PC-3 (cell line): ENCODE measurements at regions of chr5 and their contacts with region 1.

Region 1: GRCh38 chr5:11801061-11801460 is 103.2 kb downstream of the CTNND2 start:
- DNase-seq: peak; percentile 95
- ATAC-seq: peak; percentile 95
- H3K4me3 ChIP-seq: no peak overlapping the region
- H3K27ac ChIP-seq: peak overlapping the region; percentile 11
- H3K4me1 ChIP-seq: peaks cover 32% of the 10 kb centered on the region
- H3K27me3 ChIP-seq: no peaks in the 10 kb centered on the region
- CTCF ChIP-seq: no peak

Region 2: GRCh38 chr5:11212706-11213105 is 588.4 kb before region 1 on chr5:
- CTCF ChIA-PET with region 1: no interaction called
- POLR2A ChIA-PET with region 1: no interaction called
- intact Hi-C with region 1: no loop called
- DNase-seq: no peak
- ATAC-seq: no peak
- H3K4me3 ChIP-seq: no peak overlapping the region
- H3K27ac ChIP-seq: no peak overlapping the region
- H3K4me1 ChIP-seq: no peaks in the 10 kb centered on the region
- H3K27me3 ChIP-seq: peaks cover 38% of the 10 kb centered on the region
- CTCF ChIP-seq: no peak

Region 3: DNA sequence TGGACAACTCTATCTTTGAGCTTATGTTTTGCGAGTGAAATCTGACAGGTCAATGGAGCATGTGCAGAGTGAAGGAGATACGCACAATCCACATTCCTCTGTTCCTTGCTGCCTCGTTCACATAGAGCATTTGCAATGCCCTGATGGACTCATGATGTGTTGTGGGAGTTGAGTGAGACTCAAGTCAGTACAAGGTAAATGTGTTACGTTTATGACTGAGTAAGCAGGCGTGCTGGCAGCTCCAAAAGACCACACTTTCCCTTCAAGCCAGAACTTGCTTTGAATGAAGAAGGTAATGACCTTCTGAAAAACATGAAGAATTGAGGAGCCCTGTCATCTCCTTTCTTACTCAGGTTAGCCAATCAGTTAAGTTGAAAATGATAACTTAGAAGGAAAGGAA is 374.6 kb before region 1 on chr5:
- CTCF ChIA-PET with region 1: no interaction called
- POLR2A ChIA-PET with region 1: interaction called, 12 read pairs
- intact Hi-C with region 1: no loop called
- DNase-seq: no peak
- ATAC-seq: no peak
- H3K4me3 ChIP-seq: no peak overlapping the region
- H3K27ac ChIP-seq: no peak overlapping the region
- H3K4me1 ChIP-seq: no peaks in the 10 kb centered on the region
- H3K27me3 ChIP-seq: peaks cover 76% of the 10 kb centered on the region
- CTCF ChIP-seq: no peak

Region 4: DNA sequence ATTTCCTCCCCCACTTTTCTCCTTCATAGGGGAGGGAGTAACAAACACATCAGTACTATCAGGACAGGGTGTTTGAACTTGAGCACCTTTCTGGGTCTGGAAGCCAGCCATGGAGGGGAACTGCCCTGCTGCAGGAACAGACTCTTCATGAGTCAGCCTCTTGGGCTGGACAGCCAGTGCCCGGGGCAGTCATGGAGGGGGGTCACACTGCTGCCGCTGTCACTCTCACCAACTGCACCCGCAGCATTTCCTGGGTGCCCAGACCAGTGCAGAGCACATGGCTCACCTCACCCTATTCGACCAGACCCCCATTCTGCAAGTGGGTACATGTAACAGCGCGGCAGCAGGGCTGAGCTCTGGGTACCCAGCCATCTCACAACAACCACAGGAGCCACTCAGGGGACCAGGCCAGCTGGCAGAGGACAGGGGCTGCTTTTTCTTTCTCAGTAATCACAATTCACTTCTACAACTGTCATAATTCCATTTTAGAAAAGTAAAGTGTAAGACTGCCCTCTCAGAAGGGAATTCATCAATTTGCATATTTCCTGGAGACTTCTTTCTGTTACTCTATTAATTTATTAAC is 15.2 kb before region 1 on chr5:
- CTCF ChIA-PET with region 1: no interaction called
- POLR2A ChIA-PET with region 1: no interaction called
- intact Hi-C with region 1: no loop called
- DNase-seq: peak; percentile 69
- ATAC-seq: peak; percentile 87
- H3K4me3 ChIP-seq: no peak overlapping the region
- H3K27ac ChIP-seq: no peak overlapping the region
- H3K4me1 ChIP-seq: peaks cover 10% of the 10 kb centered on the region
- H3K27me3 ChIP-seq: no peaks in the 10 kb centered on the region
- CTCF ChIP-seq: no peak